ENCODE measurements at regions of chrX and their contacts with region 1.

Region 1: DNA sequence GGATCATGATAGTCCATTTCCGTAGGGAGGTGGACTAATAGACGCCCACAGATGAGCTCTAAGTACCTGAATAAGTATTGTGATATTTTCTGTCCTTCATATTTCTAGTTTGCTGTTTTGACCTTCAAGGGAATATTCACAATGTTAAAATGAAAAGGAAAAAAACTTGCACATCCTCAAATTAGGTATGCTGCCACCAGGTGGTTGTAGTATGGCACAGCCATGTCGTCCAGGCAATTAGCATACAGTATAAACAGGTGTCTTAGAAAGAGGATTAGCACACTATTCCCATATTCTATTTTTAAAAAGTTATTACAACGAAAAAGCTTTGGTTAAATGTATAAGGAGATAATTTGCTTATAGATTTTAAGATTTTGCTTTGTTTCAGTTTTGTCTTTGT is 802.0 kb downstream of the RPA4 start:
- DNase-seq: peak; percentile 13
- ATAC-seq: peak; percentile 61; the same call in 1 of the 2 replicates
- H3K4me3 ChIP-seq: no peak overlapping the region
- H3K27ac ChIP-seq: no peak overlapping the region
- H3K4me1 ChIP-seq: no peaks in the 10 kb centered on the region
- H3K27me3 ChIP-seq: no peaks in the 10 kb centered on the region
- CTCF ChIP-seq: peak; percentile 32 to 61 (median 60); a peak in 5 of 6 replicates
- POLR2A ChIP-seq: no peak
- RAD21 ChIP-seq: peak; percentile 48

Region 2: GRCh38 chrX:96770315-96770714 is 915.4 kb before region 1 on chrX:
- CTCF ChIA-PET with region 1: interaction called, 3 read pairs
- POLR2A ChIA-PET with region 1: no interaction called
- RAD21 ChIA-PET with region 1: no interaction called
- intact Hi-C with region 1: loop called (anchors 10 kb)
- DNase-seq: no peak
- ATAC-seq: no peak
- H3K4me3 ChIP-seq: no peak overlapping the region
- H3K27ac ChIP-seq: no peak overlapping the region
- H3K4me1 ChIP-seq: no peaks in the 10 kb centered on the region
- H3K27me3 ChIP-seq: no peaks in the 10 kb centered on the region
- CTCF ChIP-seq: peak; percentile 6 to 46 (median 8); a peak in 3 of 6 replicates
- POLR2A ChIP-seq: no peak
- RAD21 ChIP-seq: peak; percentile 54

Region 3: DNA sequence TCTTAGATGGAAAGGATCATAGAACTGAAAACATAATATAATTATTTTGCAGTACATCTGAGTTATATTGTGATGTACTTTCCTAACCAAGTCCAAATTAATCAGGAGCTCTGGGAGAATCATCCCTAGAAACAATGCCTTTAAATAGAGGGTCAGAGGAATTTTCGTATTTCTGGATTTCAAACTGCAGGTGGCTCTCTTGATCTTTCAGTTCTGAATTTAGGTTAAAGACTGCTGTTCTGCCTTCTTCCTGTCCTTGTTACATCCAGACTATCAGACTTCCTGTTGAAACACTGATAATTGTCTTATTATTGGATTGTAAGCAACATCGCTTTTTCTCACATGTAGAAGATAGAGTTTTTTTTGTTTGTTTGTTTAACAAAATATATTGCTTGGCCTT is 659.3 kb before region 1 on chrX:
- CTCF ChIA-PET with region 1: no interaction called
- POLR2A ChIA-PET with region 1: no interaction called
- RAD21 ChIA-PET with region 1: no interaction called
- intact Hi-C with region 1: loop called (anchors 2 kb)
- DNase-seq: no peak
- ATAC-seq: no peak
- H3K4me3 ChIP-seq: no peak overlapping the region
- H3K27ac ChIP-seq: no peak overlapping the region
- H3K4me1 ChIP-seq: no peaks in the 10 kb centered on the region
- H3K27me3 ChIP-seq: no peaks in the 10 kb centered on the region
- CTCF ChIP-seq: 0 out of 6 replicates have a peak, but pooled peaks of 1 of the 3 experiments have one; percentile 8
- POLR2A ChIP-seq: no peak
- RAD21 ChIP-seq: peak; percentile 41

Region 4: GRCh38 chrX:97446298-97446882 is 239.4 kb before region 1 on chrX:
- CTCF ChIA-PET with region 1: no interaction called
- POLR2A ChIA-PET with region 1: no interaction called
- RAD21 ChIA-PET with region 1: no interaction called
- intact Hi-C with region 1: loop called (anchors 10 kb)
- DNase-seq: no peak
- ATAC-seq: no peak
- H3K4me3 ChIP-seq: no peak overlapping the region
- H3K27ac ChIP-seq: no peak overlapping the region
- H3K4me1 ChIP-seq: no peaks in the 10 kb centered on the region
- H3K27me3 ChIP-seq: no peaks in the 10 kb centered on the region
- CTCF ChIP-seq: no peak; a peak in 1 of 6 replicates
- POLR2A ChIP-seq: no peak
- RAD21 ChIP-seq: no peak

Measured in HCT116 (cell line).